ENCODE measurements at regions of chr22 and their contacts with region 1.

Region 1: GRCh38 chr22:28051787-28052356 is 132.8 kb upstream of the PITPNB start:
- DNase-seq: peak; percentile 82
- ATAC-seq: peak; percentile 76
- H3K4me3 ChIP-seq: no peak overlapping the region
- H3K27ac ChIP-seq: peak overlapping the region; percentile 37
- H3K4me1 ChIP-seq: peaks cover 3% of the 10 kb centered on the region
- H3K27me3 ChIP-seq: no peaks in the 10 kb centered on the region
- CTCF ChIP-seq: peak; percentile 88

Region 2: GRCh38 chr22:28594797-28595462 is 543.1 kb after region 1 on chr22:
- intact Hi-C with region 1: loop called (anchors 10 kb)
- DNase-seq: no peak
- ATAC-seq: peak; percentile 93
- H3K4me3 ChIP-seq: no peak overlapping the region
- H3K27ac ChIP-seq: no peak overlapping the region
- H3K4me1 ChIP-seq: no peaks in the 10 kb centered on the region
- H3K27me3 ChIP-seq: no peaks in the 10 kb centered on the region
- CTCF ChIP-seq: peak; percentile 79